ENCODE measurements at regions of chr4 and their contacts with region 1.

Region 1: GRCh38 chr4:88211473-88212252 is 53.2 kb upstream of the ABCG2 start:
- DNase-seq: peak in 3 of 10 donors; percentile 5 to 49 (median 46)
- H3K4me3 ChIP-seq: no peak overlapping the region
- H3K27ac ChIP-seq: no peak overlapping the region
- H3K27me3 ChIP-seq: no peaks in the 10 kb centered on the region
- CTCF ChIP-seq: peak; percentile 67 to 92 (median 82)

Region 2: GRCh38 chr4:88033309-88033708 is 178.4 kb before region 1 on chr4:
- intact Hi-C with region 1: loop called (anchors 5 to 10 kb)
- DNase-seq: no peak
- H3K4me3 ChIP-seq: no peak overlapping the region
- H3K27ac ChIP-seq: no peak overlapping the region
- H3K27me3 ChIP-seq: no peaks in the 10 kb centered on the region
- CTCF ChIP-seq: peak; percentile 40 to 81 (median 66)

Region 3: DNA sequence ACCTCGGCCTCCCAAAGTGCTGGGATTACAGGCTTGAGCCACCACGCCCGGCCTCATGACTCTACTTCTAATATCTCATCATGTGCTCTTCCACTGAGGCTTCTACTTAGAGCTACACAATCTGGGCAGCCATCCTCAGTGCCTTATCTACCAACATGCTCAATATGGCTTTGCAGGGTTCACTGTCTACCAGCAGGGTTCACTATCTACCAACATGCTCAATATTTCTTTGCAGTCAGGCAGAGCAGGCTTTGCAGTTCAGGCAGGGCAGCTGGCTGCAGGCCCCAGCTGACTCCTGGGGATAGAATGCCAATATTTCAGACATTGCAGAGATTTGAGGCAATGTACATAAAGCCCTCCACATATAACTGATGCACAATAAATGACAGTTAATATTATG is 156.8 kb before region 1 on chr4:
- intact Hi-C with region 1: loop called in 1 of 2 experiments (anchors 5 kb)
- DNase-seq: no peak
- H3K4me3 ChIP-seq: no peak overlapping the region
- H3K27ac ChIP-seq: no peak overlapping the region
- H3K27me3 ChIP-seq: no peaks in the 10 kb centered on the region
- CTCF ChIP-seq: peak in 45 of 56 donors; percentile 6 to 60 (median 29)

Region 4: DNA sequence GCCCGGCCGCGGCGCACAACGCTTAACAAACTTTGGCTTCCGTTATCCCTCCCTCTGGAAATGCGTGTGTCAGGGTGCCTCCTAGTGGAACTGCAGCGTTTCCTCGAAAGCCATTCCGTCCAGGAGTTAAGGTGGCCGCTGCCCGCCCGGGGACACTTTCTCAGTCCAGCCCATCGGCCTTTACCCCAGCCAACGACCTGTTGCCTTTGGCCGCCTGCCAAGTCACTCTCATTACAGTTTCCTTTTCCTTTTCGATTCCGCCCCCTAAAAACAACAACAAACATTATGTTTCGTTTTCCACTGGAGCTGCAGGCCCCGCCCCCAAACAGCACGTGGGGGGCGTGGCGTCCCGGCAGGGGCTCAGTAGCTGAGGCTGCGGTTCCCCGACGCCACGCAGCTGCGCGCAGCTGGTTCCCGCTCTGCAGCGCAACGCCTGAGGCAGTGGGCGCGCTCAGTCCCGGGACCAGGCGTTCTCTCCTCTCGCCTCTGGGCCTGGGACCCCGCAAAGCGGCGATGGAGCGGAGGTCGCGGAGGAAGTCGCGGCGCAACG is 245.2 kb after region 1 on chr4 and contains the start of gene HERC5:
- intact Hi-C with region 1: loop called (anchors 5 kb)
- DNase-seq: peak; percentile 22 to 79 (median 74)
- H3K4me3 ChIP-seq: peak within 1 kb of the TSS; percentile 47 to 90 (median 75)
- H3K27ac ChIP-seq: peak within 1 kb of the TSS in 53 of 59 donors; percentile 0 to 86 (median 64)
- H3K27me3 ChIP-seq: peaks cover 0 to 7% (median 0%) of the 10 kb centered on the region in 45 donors
- CTCF ChIP-seq: peak; percentile 53 to 85 (median 70)
- total RNA-seq, gene HERC5: 1.6 to 17.3 (median 4.0) TPM

Measured in dorsolateral prefrontal cortex (tissue), 120 donors.